Activated CD8-positive, alpha-beta T cell treated with anti-CD3 and anti-CD28 coated beads for 36 hours (primary cell): ENCODE measurements at regions of chr12 and their contacts with region 1.

Region 1: DNA sequence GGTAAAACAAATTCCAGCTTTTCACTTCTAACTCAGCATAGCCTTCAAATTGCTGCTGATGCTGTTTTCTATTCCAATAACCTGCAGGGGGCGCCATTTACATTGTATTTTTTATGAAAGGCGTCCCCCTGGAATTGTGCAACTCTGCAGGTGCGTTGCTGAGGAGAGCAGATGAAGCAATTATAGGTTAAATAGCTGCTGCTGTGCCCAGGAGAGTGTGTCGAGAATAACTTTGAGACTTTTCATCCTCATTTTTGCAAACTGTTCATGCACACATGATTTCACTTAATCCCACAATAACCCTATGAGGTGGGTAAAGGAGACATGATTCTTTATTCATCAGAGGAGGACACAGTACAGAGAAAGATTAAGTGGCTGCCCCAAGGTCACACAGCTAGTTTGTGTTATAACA is 75.7 kb downstream of the MYRFL start:
- DNase-seq: peak; percentile 85
- ATAC-seq: no peak
- H3K4me3 Mint-ChIP-seq: no peak overlapping the region
- H3K27ac Mint-ChIP-seq: no peak overlapping the region
- H3K4me1 Mint-ChIP-seq: no peaks in the 10 kb centered on the region
- H3K27me3 Mint-ChIP-seq: peaks cover 1% of the 10 kb centered on the region
- CTCF ChIP-seq: peak; percentile 94

Region 2: DNA sequence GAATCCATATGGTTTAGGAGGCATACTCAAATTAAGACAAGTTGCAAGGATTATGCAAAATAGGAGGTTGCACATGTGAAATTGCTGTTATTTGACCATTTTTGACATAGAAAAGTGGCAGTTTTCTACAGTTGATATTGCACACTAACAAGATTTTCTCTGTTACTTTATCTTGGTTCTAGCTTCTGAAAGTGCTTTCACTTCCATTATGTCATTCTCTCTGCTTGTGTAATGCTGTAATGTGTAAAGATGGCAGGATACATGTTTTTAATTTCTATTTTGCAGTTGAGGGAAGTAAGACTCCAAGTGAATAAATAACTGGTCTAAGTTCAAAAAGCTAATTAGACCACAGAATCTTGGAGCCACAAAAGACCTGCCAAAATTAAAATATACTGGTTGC is 15.1 kb before region 1 on chr12:
- CTCF ChIA-PET with region 1: interaction called, 33 read pairs
- POLR2A ChIA-PET with region 1: no interaction called
- intact Hi-C with region 1: no loop called
- DNase-seq: no peak
- ATAC-seq: no peak
- H3K4me3 Mint-ChIP-seq: no peak overlapping the region
- H3K27ac Mint-ChIP-seq: no peak overlapping the region
- H3K4me1 Mint-ChIP-seq: no peaks in the 10 kb centered on the region
- H3K27me3 Mint-ChIP-seq: peaks cover 2% of the 10 kb centered on the region
- CTCF ChIP-seq: no peak

Region 3: GRCh38 chr12:69919495-69919894 is 18.8 kb after region 1 on chr12:
- CTCF ChIA-PET with region 1: interaction called, 14 read pairs
- POLR2A ChIA-PET with region 1: no interaction called
- intact Hi-C with region 1: no loop called
- DNase-seq: no peak
- ATAC-seq: no peak
- H3K4me3 Mint-ChIP-seq: no peak overlapping the region
- H3K27ac Mint-ChIP-seq: no peak overlapping the region
- H3K4me1 Mint-ChIP-seq: no peaks in the 10 kb centered on the region
- H3K27me3 Mint-ChIP-seq: no peaks in the 10 kb centered on the region
- CTCF ChIP-seq: no peak

Region 4: DNA sequence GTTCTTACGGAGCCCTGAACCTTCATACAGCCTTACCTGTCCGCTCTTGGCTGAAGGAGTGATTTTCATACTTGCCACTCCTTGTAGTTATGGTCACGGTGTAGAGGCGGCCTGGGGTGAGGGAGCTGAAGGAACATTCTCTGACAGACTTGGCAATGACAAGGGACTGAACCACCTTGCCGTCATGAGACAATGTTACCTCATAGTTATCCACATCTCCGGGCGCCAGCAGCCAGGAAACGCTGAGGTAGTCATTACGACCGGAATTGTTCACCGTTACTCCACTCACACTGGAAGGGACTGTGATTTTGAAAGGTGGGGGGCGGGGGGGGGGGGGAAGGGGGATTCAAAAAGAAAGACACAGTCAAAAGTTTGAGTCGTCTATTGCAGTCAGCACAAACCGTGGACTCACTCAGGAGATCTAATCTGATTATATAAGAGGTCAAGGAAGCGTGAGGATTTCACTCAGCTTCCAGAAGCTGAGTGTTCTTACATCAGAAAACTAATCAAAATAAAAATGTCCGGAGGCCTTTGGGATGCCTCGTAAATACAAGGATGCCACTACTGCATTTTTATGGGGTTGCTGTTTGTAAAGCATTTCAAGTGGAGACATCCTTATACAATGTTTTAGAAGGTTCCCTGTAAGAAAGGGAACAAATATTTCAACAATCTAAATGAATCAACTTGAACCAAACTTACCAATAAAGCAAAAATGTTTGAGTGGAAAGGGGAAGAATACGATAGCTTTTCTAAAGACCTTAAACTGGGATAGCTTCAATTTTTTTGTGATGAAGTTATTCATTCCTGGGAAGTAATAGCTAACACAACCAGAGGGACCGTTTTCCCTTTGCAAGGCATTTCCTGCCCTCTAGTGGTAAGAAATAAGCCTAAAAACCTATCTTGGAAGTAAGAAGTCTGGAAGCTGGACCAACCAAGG is 675.9 kb after region 1 on chr12:
- CTCF ChIA-PET with region 1: interaction called, 45 read pairs
- POLR2A ChIA-PET with region 1: no interaction called
- intact Hi-C with region 1: loop called (anchors 2 kb)
- DNase-seq: no peak
- ATAC-seq: no peak
- H3K4me3 Mint-ChIP-seq: no peak overlapping the region
- H3K27ac Mint-ChIP-seq: no peak overlapping the region
- H3K4me1 Mint-ChIP-seq: no peaks in the 10 kb centered on the region
- H3K27me3 Mint-ChIP-seq: peaks cover 9% of the 10 kb centered on the region
- CTCF ChIP-seq: peak; percentile 69

Region 5: GRCh38 chr12:70719672-70720420 is 819.1 kb after region 1 on chr12:
- CTCF ChIA-PET with region 1: interaction called, 10 read pairs
- POLR2A ChIA-PET with region 1: no interaction called
- intact Hi-C with region 1: no loop called
- DNase-seq: peak; percentile 45
- ATAC-seq: peak; percentile 68
- H3K4me3 Mint-ChIP-seq: peak overlapping the region; percentile 28
- H3K27ac Mint-ChIP-seq: no peak overlapping the region
- H3K4me1 Mint-ChIP-seq: peaks cover 2% of the 10 kb centered on the region
- H3K27me3 Mint-ChIP-seq: peaks cover 3% of the 10 kb centered on the region
- CTCF ChIP-seq: peak; percentile 95